ENCODE measurements at regions of chr2 and their contacts with region 1.

Region 1: GRCh38 chr2:216388046-216388884 is 16.0 kb upstream of the MARCHF4 start:
- DNase-seq: no peak

Region 2: DNA sequence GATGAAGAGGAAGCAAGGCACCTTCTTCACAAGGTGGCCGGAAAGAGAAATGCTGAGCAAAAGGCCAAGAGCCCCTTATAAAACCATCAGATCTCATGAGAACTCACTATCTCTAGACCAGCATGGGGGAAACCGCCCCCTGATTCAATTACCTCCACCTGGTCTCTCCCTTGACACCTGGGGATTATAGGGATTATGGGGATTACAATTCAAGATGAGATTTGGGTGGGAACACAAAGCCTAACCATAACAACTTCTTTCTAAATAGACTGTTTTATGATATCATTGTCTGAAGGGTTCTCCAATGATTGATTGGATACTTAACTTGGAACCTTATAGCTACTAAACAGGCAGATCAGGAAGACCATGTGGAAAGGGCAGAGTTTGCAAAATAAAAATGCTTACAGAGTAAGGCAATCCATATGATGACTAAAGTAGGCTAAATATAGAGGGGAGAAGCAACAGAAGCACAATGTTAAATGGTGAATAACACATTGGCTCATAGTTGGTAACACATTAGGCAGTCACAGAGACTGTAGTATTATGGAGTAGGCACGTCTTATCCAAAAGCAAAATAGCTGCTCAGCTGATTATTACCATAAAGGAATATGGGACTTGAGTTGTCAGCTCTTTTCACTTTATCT is 1757.7 kb before region 1 on chr2:
- intact Hi-C with region 1: loop called in 1 of 2 experiments (anchors 10 kb)
- DNase-seq: no peak

Region 3: DNA sequence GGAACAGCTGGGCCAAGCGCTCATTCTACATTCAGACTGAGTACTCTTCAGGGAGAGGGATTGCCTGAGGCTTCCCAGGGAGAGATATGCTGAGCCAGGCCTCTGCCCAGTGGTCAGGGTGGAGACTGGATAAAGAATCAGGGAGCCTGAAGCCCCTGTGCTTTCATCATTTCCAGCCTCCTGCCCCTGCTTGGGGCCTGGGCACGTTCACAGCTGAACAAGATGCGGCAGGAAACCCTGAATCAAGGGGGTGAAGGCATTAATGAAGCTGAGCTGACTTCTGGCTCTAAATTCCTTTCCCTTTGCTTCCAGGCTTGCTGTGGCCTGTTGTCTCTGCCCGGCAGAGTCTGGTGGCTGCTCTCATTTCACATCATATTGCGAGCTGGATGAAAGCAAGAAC is 145.3 kb after region 1 on chr2:
- intact Hi-C with region 1: no loop called
- DNase-seq: no peak